Heart right ventricle (tissue), 16 donors: ENCODE measurements at regions of chr11 and their contacts with region 1.

Region 1: DNA sequence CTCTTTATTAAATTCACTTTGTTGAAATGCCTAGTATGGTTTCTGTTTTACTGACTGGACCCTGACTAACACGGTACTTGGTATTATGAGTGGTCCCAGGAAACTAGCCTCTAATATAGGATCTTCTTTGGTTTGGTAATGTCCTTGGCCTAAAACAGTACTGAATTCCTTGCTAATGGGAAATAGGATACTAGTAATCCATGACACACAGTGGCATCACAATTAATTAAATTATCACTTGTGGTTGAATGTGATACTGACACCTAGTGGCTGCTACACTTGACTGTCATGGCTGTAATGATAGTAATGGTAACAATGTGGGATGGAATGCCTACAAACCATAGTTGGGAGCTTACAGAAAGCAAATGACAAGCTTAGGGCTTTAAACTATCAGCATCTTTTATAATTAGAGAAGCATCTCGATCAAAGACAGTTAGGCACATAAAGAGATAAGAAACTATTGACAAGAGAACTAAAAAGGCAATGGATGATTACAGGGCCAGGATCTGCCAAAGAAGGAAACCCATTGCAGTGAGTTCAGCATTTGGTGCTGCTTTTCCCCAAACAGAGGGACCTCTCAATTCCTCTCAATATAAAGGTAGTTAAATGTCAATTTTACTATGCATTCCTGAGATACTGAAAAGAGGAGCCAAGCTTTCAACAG is 8.6 kb downstream of the DNHD1 start:
- DNase-seq: peak in 1 of 2 donors; percentile 14
- ATAC-seq: peak in 5 of 8 donors; percentile 51 to 73 (median 61)
- H3K4me3 ChIP-seq: no peak overlapping the region
- H3K27ac ChIP-seq: no peak overlapping the region
- H3K4me1 ChIP-seq: no peaks in the 10 kb centered on the region
- H3K27me3 ChIP-seq: no peaks in the 10 kb centered on the region
- CTCF ChIP-seq: peak; percentile 51 to 84 (median 75)

Region 2: GRCh38 chr11:6443269-6444003 is 62.3 kb before region 1 on chr11:
- intact Hi-C with region 1: loop called in 5 of 10 experiments (anchors 5 kb)
- DNase-seq: peak; percentile 40 to 48
- ATAC-seq: peak; percentile 52 to 84 (median 78)
- H3K4me3 ChIP-seq: no peak overlapping the region
- H3K27ac ChIP-seq: no peak overlapping the region
- H3K4me1 ChIP-seq: peaks cover 0 to 9% (median 0%) of the 10 kb centered on the region in 9 donors
- H3K27me3 ChIP-seq: no peaks in the 10 kb centered on the region
- CTCF ChIP-seq: peak; percentile 54 to 87 (median 82)